Esophagus muscularis mucosa (tissue), 4 donors: ENCODE measurements at regions of chr7 and their contacts with region 1.

Region 1: GRCh38 chr7:116929914-116930913 is 23.1 kb upstream of the ST7 start:
- DNase-seq: peak; percentile 95
- H3K4me3 ChIP-seq: no peak overlapping the region
- H3K27ac ChIP-seq: no peak overlapping the region
- H3K4me1 ChIP-seq: peaks cover 0 to 4% (median 1%) of the 10 kb centered on the region in 4 donors
- H3K27me3 ChIP-seq: no peaks in the 10 kb centered on the region
- CTCF ChIP-seq: peak; percentile 89 to 94 (median 92)
- EP300 ChIP-seq: no peak
- POLR2A ChIP-seq: no peak

Region 2: GRCh38 chr7:116984917-116985316 is 54.7 kb after region 1 on chr7:
- intact Hi-C with region 1: loop called (anchors 5 kb)
- DNase-seq: no peak
- H3K4me3 ChIP-seq: no peak overlapping the region
- H3K27ac ChIP-seq: no peak overlapping the region
- H3K4me1 ChIP-seq: peaks cover 0 to 3% (median 0%) of the 10 kb centered on the region in 4 donors
- H3K27me3 ChIP-seq: no peaks in the 10 kb centered on the region
- CTCF ChIP-seq: peak; percentile 63 to 67 (median 63)
- EP300 ChIP-seq: no peak
- POLR2A ChIP-seq: no peak

Region 3: DNA sequence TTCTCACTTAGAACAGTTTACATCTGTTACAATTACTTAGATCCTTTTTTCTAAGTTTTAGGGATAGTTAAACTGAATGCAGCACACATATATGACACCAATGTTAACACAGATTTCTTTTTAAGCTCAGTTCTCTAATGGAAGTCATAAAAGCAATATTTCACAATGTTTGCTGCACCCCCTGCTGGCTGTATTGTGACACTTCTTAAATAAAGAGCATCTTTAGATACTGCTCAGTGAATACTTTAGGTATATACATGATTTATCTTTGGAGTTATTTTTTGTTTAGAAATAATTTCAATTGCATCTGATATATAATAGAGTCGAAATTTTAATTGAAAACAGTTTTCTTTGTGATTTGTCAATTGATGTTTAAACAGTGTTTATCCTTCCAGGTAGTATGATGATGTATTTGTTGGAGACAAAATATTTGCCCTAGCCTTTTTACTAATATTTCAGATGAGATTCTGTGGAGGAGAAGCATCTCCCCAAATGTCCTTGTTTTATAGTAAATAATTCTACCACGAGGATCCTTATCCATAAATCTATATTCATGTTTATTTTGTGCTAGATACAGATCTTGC is 197.5 kb after region 1 on chr7:
- intact Hi-C with region 1: loop called (anchors 2 kb)
- DNase-seq: no peak
- H3K4me3 ChIP-seq: no peak overlapping the region
- H3K27ac ChIP-seq: no peak overlapping the region
- H3K4me1 ChIP-seq: peaks cover 12 to 25% (median 18%) of the 10 kb centered on the region in 4 donors
- H3K27me3 ChIP-seq: no peaks in the 10 kb centered on the region
- CTCF ChIP-seq: peak; percentile 67 to 77 (median 75)
- EP300 ChIP-seq: no peak
- POLR2A ChIP-seq: no peak